ENCODE measurements at regions of chr19 and their contacts with region 1.

Region 1: DNA sequence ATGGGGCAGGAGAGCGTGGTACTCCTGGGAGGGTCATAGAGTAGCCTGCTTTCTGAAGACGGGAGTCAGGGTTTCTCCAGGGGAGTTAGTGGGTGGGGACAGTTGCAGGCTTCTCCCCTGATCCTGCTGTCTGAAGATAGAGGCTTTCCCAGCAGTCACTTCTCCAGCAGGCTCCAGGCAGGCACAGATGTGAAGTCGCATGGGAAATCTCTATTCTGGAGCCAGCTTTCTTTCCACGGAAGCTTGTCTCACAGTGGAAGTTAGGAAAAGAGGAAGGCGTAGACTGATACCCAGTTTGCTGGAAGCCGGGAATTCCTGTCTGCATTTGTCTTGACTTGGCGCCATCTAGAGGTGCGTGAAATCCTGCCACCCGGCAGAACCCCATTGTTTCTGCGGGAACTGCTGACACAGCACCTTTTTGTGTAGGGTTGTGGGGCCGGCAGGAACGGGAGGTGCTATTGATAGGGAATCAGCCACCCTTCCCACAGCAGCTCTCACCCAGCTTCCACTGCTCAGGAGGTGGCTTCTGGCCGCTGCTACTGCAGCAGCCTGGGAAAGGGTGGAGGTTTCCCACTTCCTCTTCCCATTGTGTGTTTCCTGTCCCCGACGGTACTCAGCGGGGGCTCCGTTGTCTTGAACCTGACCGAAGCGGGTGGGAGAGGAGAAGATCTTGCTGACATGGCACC is 28.5 kb upstream of the NPAS1 start:
- DNase-seq: peak; percentile 71
- H3K4me3 Mint-ChIP-seq: no peak overlapping the region
- H3K27ac Mint-ChIP-seq: peak overlapping the region; percentile 62
- H3K4me1 Mint-ChIP-seq: peaks cover 14% of the 10 kb centered on the region
- H3K27me3 Mint-ChIP-seq: no peaks in the 10 kb centered on the region

Region 2: GRCh38 chr19:46856050-46857022 is 134.8 kb before region 1 on chr19:
- CTCF ChIA-PET with region 1: interaction called, 33 read pairs
- DNase-seq: peak; percentile 95
- H3K4me3 Mint-ChIP-seq: peak overlapping the region; percentile 33
- H3K27ac Mint-ChIP-seq: peak overlapping the region; percentile 81
- H3K4me1 Mint-ChIP-seq: peaks cover 27% of the 10 kb centered on the region
- H3K27me3 Mint-ChIP-seq: peaks cover 20% of the 10 kb centered on the region

Region 3: DNA sequence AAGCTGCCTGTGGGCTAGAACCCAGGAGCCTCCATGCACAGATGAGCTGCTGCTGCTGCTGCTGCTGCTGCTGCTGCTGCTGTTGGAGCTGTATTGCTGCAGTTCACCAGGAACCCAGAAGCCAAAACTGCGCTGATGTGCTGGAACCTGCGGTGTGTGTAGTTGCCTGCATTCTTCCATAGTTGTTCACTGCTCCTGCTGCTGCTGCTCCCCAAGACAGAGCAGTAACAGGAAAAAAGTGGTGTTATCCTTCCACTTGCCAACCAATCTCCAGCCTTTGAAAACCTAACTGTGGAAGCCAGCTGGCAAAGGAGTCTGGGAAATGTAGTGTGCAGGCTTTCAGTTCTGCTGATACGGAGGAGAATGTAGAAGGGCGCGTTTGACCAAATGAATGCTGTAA is 92.4 kb before region 1 on chr19:
- CTCF ChIA-PET with region 1: no interaction called
- DNase-seq: no peak
- H3K4me3 Mint-ChIP-seq: no peak overlapping the region
- H3K27ac Mint-ChIP-seq: no peak overlapping the region
- H3K4me1 Mint-ChIP-seq: peaks cover 2% of the 10 kb centered on the region
- H3K27me3 Mint-ChIP-seq: no peaks in the 10 kb centered on the region

Region 4: DNA sequence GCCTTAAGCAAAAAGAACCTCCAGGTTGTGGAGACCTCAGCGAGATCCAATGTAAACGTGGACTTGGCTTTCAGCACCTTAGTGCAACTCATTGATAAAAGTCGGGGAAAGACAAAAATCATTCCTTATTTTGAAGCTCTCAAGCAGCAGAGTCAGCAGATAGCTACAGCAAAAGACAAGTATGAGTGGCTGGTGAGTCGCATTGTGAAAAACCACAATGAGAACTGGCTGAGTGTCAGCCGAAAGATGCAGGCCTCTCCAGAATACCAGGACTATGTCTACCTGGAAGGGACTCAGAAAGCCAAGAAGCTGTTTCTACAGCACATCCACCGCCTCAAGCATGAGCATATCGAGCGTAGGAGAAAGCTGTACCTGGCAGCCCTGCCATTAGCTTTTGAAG is 71.8 kb before region 1 on chr19:
- CTCF ChIA-PET with region 1: interaction called, 13 read pairs
- DNase-seq: no peak
- H3K4me3 Mint-ChIP-seq: no peak overlapping the region
- H3K27ac Mint-ChIP-seq: no peak overlapping the region
- H3K4me1 Mint-ChIP-seq: peaks cover 10% of the 10 kb centered on the region
- H3K27me3 Mint-ChIP-seq: no peaks in the 10 kb centered on the region

Region 5: DNA sequence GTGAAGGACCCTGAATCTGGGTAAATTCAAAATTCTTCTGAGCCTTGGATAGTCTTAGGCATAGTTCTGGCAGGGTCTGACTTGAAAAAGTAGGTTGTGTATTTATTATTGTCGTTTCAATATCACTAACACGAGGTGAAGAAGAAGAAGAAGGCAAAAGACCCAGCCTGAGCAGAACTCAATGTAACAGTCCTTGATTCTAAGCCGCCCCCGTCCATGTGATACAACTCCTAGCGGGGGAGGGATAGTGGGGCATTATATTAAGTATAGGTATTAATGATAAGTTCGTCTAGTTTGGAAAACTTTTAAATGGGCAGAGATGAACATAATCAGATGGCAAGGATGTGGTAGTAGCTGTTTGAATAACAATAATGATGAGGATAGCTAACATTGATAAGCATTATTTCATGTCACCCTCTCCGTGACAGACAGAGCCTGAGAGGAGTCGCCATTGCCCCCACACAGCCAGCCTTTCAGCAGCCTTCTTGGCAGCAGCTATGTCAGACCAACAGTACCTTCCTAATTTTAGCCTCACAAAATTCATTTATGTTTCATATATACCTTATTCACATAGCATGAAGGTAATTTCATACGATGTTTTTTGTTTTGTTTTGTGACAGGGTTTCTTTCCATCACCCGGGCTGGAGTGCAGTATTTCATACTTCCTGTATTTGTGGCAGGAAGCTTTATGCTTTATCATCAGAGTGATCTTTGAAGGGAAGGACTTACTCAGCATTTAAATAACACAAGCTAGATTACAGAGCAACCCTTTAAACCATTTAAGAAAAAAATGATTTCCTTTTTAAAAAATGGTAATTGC is 35.9 kb before region 1 on chr19:
- CTCF ChIA-PET with region 1: interaction called, 13 read pairs
- DNase-seq: peak; percentile 56
- H3K4me3 Mint-ChIP-seq: peak overlapping the region; percentile 70
- H3K27ac Mint-ChIP-seq: peak overlapping the region; percentile 99
- H3K4me1 Mint-ChIP-seq: peaks cover 62% of the 10 kb centered on the region
- H3K27me3 Mint-ChIP-seq: no peaks in the 10 kb centered on the region

Region 6: DNA sequence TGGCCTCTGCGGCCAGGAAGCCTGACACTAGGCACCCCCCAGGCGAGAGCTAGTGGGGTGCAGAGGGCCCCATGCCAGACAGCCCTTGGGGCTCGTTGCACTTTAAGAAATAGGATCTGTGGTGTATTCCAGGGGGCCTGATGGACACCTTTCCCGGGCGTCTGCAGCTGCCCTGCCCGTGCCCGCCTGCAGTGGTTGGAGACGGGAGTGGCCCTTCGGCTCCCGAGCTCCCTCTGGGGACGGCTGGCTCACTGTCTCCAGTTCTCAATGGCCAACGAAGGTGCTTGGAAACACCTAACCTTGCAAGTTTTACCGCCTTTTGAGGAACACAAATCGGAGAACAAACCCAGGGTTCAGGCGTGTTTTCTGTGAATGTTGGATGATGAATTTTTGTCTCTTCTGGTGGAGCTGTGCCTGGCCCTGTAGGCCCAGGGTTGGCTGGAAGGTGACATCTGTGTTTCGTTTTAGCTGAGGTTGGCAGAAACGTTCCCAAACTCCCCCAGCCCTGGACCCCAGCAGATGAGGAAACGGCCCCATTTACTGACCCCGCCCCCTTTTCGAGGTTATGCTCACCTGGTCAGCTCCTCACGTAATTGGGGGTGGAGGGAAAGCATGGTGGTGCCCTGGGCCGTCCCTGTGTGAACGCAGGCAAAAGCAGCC is 11.1 kb after region 1 on chr19:
- CTCF ChIA-PET with region 1: interaction called, 18 read pairs
- DNase-seq: no peak
- H3K4me3 Mint-ChIP-seq: no peak overlapping the region
- H3K27ac Mint-ChIP-seq: no peak overlapping the region
- H3K4me1 Mint-ChIP-seq: no peaks in the 10 kb centered on the region
- H3K27me3 Mint-ChIP-seq: peaks cover 50% of the 10 kb centered on the region

Measured in activated naive CD4-positive, alpha-beta T cell treated with anti-CD3 and anti-CD28 coated beads, Interleukin-2, amount 10 ng/mL, durations not matched to agents 7 days and 5 days (primary cell).